ENCODE measurements at regions of chr9 and their contacts with region 1.

Region 1: DNA sequence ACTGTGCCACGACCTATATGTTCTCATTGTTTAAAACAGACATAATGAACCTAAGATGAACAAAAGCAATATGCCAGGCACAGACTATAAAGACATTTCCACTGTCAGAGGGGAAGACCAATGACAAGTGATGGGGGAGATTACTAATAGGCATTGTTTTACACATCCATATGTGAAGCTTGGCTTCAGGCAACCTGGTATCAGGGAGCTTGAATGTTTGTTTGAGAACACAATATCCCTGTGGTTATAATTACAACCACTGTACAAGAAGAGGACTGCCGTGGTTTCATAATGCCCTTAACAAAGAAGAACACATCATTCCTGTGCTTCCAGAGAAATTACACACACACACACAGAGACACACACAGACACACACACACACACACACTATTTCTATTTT is 385.7 kb downstream of the BNC2 start:
- DNase-seq: no peak
- ATAC-seq: no peak
- H3K4me3 Mint-ChIP-seq: no peak overlapping the region
- H3K27ac Mint-ChIP-seq: no peak overlapping the region
- H3K4me1 Mint-ChIP-seq: no peaks in the 10 kb centered on the region
- H3K27me3 Mint-ChIP-seq: no peaks in the 10 kb centered on the region

Region 2: DNA sequence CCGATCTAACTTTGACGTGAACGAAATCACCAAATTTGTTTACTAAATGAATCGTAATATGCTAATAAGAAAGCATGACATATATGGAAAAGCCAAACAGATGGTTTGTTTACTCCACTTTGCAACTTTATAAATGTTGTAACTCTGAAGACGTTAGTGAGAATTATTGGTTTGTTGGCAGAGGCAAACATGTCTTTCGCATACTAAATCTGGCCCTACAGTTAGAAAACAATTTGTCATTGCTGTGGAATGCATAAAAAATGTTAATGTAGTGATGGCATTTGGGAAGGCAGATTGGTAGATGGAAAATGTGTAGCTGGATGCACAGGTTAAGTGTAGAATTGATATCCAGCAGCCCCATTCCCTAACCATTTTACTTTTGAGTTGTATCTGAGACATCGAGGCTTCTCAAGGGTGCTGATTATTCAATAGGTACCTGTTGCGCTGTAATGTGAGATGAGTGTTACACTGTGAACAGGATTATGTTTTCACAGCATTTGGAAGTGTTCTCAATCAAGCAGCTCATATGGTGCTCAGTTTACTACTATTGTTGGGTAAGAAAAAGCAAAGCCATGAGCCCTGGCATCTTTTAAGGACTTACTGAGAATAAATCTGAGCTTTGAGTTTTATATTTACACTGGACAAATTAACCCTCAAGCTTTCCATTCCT is 59.0 kb before region 1 on chr9:
- CTCF ChIA-PET with region 1: no interaction called
- POLR2A ChIA-PET with region 1: no interaction called
- intact Hi-C with region 1: loop called in 1 of 2 experiments (anchors 10 kb)
- DNase-seq: no peak
- ATAC-seq: no peak
- H3K4me3 Mint-ChIP-seq: no peak overlapping the region
- H3K27ac Mint-ChIP-seq: no peak overlapping the region
- H3K4me1 Mint-ChIP-seq: no peaks in the 10 kb centered on the region
- H3K27me3 Mint-ChIP-seq: no peaks in the 10 kb centered on the region